Activated CD8-positive, alpha-beta T cell treated with anti-CD3 and anti-CD28 coated beads for 36 hours (primary cell): ENCODE measurements at regions of chr3 and their contacts with region 1.

Region 1: DNA sequence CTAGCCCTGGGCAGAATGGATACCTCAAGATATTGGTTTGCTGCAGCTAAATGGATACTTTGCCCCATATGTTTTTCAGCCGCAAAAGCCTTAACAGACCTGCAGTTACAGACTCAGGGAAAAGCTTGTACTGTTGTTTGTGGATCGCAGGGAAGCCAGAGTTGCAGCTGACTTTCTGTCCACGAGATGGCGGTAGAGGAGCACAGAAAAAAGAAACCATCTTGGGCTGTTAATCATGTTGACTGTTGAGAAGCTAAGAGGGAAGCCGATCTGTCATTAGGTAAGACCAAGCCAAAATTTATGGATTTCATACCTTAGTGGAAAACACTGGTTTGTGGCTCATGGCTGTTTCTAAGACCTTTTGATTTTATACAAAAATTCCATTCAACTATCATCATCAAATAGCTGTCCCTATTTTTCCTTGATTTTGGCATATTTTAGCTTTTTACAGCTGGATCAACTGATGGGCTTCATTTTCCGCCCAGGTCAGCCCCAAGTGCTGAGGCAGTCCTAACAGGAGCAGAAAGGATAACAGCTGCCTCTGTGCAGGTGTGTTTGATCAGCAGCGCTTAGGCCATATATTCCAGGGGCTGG is 205.7 kb upstream of the ZPLD1 start:
- DNase-seq: peak; percentile 84
- ATAC-seq: peak; percentile 86
- H3K4me3 Mint-ChIP-seq: no peak overlapping the region
- H3K27ac Mint-ChIP-seq: no peak overlapping the region
- H3K4me1 Mint-ChIP-seq: peaks cover 9% of the 10 kb centered on the region
- H3K27me3 Mint-ChIP-seq: no peaks in the 10 kb centered on the region
- CTCF ChIP-seq: peak; percentile 86

Region 2: GRCh38 chr3:101809178-101810021 is 419.8 kb before region 1 on chr3:
- CTCF ChIA-PET with region 1: interaction called, 302 read pairs
- POLR2A ChIA-PET with region 1: no interaction called
- intact Hi-C with region 1: loop called (anchors 2 kb)
- DNase-seq: peak; percentile 54
- ATAC-seq: peak; percentile 80
- H3K4me3 Mint-ChIP-seq: no peak overlapping the region
- H3K27ac Mint-ChIP-seq: peak overlapping the region; percentile 55
- H3K4me1 Mint-ChIP-seq: peaks cover 51% of the 10 kb centered on the region
- H3K27me3 Mint-ChIP-seq: no peaks in the 10 kb centered on the region
- CTCF ChIP-seq: peak; percentile 90

Region 3: GRCh38 chr3:101995371-101996046 is 233.7 kb before region 1 on chr3:
- CTCF ChIA-PET with region 1: interaction called, 13 read pairs
- POLR2A ChIA-PET with region 1: no interaction called
- intact Hi-C with region 1: loop called (anchors 10 kb)
- DNase-seq: no peak
- ATAC-seq: peak; percentile 77
- H3K4me3 Mint-ChIP-seq: no peak overlapping the region
- H3K27ac Mint-ChIP-seq: peak overlapping the region; percentile 54
- H3K4me1 Mint-ChIP-seq: peaks cover 29% of the 10 kb centered on the region
- H3K27me3 Mint-ChIP-seq: no peaks in the 10 kb centered on the region
- CTCF ChIP-seq: no peak

Region 4: DNA sequence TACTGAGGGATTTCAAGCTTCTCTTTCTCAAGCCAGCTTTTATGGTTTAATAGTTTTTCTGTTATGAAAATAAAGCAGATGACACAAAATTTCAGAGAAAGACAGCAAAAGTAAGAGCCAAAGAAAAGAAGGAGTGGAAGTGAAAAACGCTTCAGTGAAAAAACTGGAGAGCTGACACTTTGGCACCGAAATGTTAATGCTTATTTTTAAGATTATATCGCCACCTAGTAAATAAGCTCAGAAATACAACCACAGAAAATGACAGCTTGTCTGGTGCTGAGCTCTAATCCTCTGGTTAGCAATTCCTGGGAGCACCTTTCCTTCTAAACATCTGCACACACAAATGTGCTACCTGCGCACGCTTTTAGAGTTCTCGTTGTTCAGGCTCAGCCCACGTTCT is 307.3 kb after region 1 on chr3:
- CTCF ChIA-PET with region 1: interaction called, 92 read pairs
- POLR2A ChIA-PET with region 1: no interaction called
- intact Hi-C with region 1: loop called (anchors 2 kb)
- DNase-seq: no peak
- ATAC-seq: no peak
- H3K4me3 Mint-ChIP-seq: no peak overlapping the region
- H3K27ac Mint-ChIP-seq: no peak overlapping the region
- H3K4me1 Mint-ChIP-seq: no peaks in the 10 kb centered on the region
- H3K27me3 Mint-ChIP-seq: peaks cover 8% of the 10 kb centered on the region
- CTCF ChIP-seq: peak; percentile 29

Region 5: DNA sequence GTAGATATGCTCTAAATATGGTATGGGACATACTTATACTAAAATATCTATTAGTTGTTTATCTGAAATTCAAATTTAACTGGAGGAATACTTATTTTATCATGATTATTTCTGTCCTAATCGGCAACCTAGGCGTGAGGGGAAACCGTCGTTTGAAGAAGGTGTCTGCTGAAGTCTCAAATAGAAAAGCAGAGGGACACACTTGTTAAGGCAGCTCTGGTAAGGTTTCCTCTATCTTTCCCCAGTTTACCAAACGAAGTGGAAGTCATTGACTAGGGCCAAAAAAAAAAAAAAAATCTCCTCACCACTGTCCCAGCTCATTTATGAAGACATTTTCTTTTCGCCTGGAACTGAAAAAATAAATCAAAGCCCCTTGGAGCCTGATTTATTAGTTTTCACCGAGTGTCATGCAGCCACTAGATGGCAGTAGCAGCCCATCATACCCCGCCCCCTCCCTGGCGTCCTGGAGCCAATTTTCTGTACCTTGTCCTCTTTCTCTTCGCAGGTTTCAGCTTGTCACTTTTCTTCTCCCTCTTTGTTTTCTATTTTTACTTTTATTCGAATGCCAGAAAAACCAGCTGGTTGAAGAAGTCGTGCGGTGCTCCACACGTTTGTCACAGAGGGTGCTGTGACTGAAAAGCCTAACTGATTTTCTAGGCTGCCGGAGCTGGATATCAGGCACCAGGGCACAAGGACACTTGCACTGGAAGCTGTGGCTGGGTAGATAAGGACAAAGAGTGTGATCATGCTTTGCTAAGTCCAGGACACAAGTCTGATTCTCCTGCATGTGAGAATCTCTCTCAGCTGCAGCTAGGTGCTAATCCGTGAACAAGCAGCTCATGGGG is 444.3 kb after region 1 on chr3:
- CTCF ChIA-PET with region 1: interaction called, 13 read pairs
- POLR2A ChIA-PET with region 1: no interaction called
- intact Hi-C with region 1: no loop called
- DNase-seq: peak; percentile 78
- ATAC-seq: peak; percentile 67
- H3K4me3 Mint-ChIP-seq: no peak overlapping the region
- H3K27ac Mint-ChIP-seq: no peak overlapping the region
- H3K4me1 Mint-ChIP-seq: no peaks in the 10 kb centered on the region
- H3K27me3 Mint-ChIP-seq: peaks cover 2% of the 10 kb centered on the region
- CTCF ChIP-seq: peak; percentile 81